ENCODE measurements at regions of chr12 and their contacts with region 1.

Region 1: GRCh38 chr12:114355389-114356088 is 50.4 kb downstream of the TBX5 start:
- DNase-seq: no peak

Region 2: DNA sequence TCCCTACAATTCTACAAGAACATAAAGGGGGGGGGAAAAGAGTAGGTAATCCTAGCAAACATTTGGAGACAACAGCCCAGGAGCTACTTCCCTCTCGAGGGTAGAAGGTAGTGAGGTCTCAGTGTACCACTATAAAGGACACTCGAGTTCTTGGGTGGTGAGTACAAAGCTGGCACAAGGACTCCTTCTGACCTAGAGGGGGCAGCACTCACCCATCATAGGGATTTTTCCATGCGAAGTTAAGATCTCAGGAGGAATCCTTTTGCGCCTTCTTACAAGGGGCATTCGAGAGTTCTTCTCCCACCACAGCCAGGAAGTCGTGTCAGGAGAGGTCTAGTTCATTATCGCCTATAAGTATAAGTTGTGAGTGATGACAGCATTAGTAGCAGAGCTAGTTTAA is 189.2 kb before region 1 on chr12:
- intact Hi-C with region 1: loop called (anchors 10 kb)
- DNase-seq: no peak

Region 3: GRCh38 chr12:114403011-114403689 is 47.6 kb after region 1 on chr12:
- intact Hi-C with region 1: loop called (anchors 5 kb)
- DNase-seq: no peak

Region 4: DNA sequence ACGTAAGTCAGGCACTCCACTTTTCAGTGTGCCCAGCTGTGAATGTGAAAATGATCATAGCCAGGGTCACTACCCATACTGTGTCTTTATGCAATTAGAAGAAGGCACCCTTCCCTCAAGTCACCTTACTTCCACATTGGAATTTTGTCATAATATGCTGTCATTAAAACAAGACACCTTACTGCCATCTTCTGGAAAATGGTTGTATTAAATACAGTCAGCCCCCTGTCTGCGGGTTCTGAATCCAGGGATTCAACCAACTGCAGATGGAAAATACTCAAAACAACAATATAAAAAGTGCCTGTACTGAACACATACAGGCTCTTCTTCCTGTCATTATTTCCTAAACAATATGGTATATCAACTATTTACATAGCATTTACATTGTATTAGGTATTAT is 120.6 kb after region 1 on chr12:
- intact Hi-C with region 1: loop called (anchors 5 kb)
- DNase-seq: no peak

Measured in cardiac septum (tissue), 1 donor.